ENCODE measurements at regions of chr19 and their contacts with region 1.

Region 1: DNA sequence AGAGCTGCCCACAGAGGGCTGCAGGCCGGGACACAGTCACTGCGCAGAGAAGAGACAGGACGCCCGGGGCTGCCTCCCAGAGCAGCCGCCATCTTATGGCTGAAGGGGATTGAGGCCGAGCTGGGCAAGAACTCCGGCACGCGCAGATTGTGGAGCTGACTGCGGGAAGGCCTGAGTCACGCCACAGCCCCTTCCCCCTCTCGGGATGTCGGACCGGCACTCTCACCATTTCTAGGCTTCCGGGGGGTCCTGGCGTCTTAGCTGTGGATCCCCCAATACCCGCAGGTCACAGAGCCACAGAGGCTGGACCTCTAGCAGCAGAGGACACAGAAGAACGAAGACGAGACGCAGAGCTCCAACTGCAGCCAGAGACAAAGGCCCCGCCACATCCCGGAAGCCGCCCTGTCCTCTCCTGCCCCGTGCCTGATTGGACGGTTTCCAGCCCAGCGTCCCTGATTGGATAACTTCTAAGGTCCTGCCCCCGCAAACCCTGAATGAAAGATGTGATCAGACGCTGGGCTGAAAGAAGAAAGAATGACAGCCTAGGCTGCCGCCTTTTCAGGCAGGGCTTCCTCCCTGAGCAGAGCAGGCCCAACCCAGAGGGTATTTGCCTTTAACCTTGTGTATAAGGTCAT is at the start of gene ZNF43:
- DNase-seq: peak; percentile 96 to 99
- ATAC-seq: peak; percentile 99 to 100 (median 99)
- H3K4me3 ChIP-seq: peak within 1 kb of the TSS; percentile 64 to 89 (median 79)
- H3K27ac ChIP-seq: peak within 1 kb of the TSS; percentile 87 to 96 (median 92)
- H3K4me1 ChIP-seq: peaks cover 0 to 18% (median 8%) of the 10 kb centered on the region in 9 donors
- H3K27me3 ChIP-seq: no peaks in the 10 kb centered on the region
- CTCF ChIP-seq: no peak
- total RNA-seq, gene ZNF43: 5.0 to 9.5 (median 7.2) TPM

Region 2: GRCh38 chr19:21851596-21852345 is 15.8 kb after region 1 on chr19:
- intact Hi-C with region 1: loop called in 1 of 10 experiments (anchors 2 kb)
- DNase-seq: peak; percentile 93 to 97
- ATAC-seq: peak; percentile 99 to 100 (median 100)
- H3K4me3 ChIP-seq: peak overlapping the region; percentile 53 to 94 (median 82)
- H3K27ac ChIP-seq: peak overlapping the region in 9 of 10 donors; percentile 63 to 89 (median 80)
- H3K4me1 ChIP-seq: peaks cover 0 to 24% (median 10%) of the 10 kb centered on the region in 9 donors
- H3K27me3 ChIP-seq: peaks cover 0 to 9% (median 6%) of the 10 kb centered on the region in 7 donors
- CTCF ChIP-seq: peak in 2 of 9 donors; percentile 8 to 37

Measured in heart right ventricle (tissue), 16 donors.